ENCODE measurements at regions of chr1 and their contacts with region 1.

Region 1: GRCh38 chr1:166432655-166433054 is 265.9 kb upstream of the FAM78B start:
- DNase-seq: no peak
- H3K4me3 ChIP-seq: no peak overlapping the region
- H3K27ac ChIP-seq: no peak overlapping the region
- H3K4me1 ChIP-seq: no peaks in the 10 kb centered on the region
- H3K27me3 ChIP-seq: no peaks in the 10 kb centered on the region
- CTCF ChIP-seq: no peak

Region 2: DNA sequence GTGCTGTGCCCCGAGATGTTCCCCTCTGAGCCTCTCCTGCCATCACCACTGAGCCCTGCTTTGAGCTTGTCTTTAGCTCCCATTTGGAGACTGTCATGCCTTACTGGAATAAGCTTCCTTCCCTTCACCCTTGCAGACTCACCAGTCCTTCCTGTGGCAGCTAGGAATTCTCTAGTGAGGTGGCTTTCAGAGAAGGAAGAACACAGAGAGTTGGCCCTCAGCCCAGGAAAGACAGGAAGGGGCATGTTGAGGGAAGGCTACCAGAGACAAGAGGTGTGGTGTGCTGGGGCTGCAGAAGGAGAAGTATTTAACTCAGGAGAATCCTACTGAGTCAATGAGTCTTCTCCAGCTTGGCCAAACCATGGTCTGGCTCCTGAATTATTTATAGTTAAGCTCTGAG is 529.0 kb before region 1 on chr1:
- intact Hi-C with region 1: no loop called
- DNase-seq: no peak
- H3K4me3 ChIP-seq: no peak overlapping the region
- H3K27ac ChIP-seq: no peak overlapping the region
- H3K4me1 ChIP-seq: peaks cover 36% of the 10 kb centered on the region
- H3K27me3 ChIP-seq: no peaks in the 10 kb centered on the region
- CTCF ChIP-seq: no peak

Region 3: GRCh38 chr1:165928075-165928731 is 504.5 kb before region 1 on chr1:
- intact Hi-C with region 1: loop called (anchors 5 kb)
- DNase-seq: no peak
- H3K4me3 ChIP-seq: no peak overlapping the region
- H3K27ac ChIP-seq: no peak overlapping the region
- H3K4me1 ChIP-seq: no peaks in the 10 kb centered on the region
- H3K27me3 ChIP-seq: peaks cover 16% of the 10 kb centered on the region
- CTCF ChIP-seq: peak; percentile 70

Region 4: DNA sequence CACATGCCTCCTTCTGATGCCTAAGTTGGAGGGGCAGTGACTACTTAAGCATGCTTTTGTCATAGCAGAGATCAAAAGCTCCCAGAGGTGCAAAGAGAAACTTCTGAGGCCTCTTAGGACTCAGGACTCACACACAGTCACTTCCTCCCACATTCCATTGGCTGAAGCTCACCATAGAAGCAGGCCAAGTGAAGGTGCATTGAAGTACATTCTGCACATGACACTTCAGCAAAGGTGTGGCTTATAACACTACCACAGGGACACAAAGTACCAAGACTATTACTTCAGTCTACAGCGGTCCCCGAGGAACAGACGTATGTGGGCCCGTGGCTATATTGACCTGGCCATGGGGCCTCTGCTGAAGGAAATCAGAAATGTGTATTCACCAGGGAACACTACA is 404.1 kb after region 1 on chr1:
- intact Hi-C with region 1: no loop called
- DNase-seq: no peak
- H3K4me3 ChIP-seq: no peak overlapping the region
- H3K27ac ChIP-seq: no peak overlapping the region
- H3K4me1 ChIP-seq: peaks cover 33% of the 10 kb centered on the region
- H3K27me3 ChIP-seq: no peaks in the 10 kb centered on the region
- CTCF ChIP-seq: no peak

Measured in left ventricle myocardium inferior (tissue), 1 donor.